Esophagus muscularis mucosa (tissue), 4 donors: ENCODE measurements at regions of chr14 and their contacts with region 1.

Region 1: GRCh38 chr14:33848706-33849454 is 102.0 kb downstream of the EGLN3 start:
- DNase-seq: peak; percentile 89
- H3K4me3 ChIP-seq: no peak overlapping the region
- H3K27ac ChIP-seq: no peak overlapping the region
- H3K4me1 ChIP-seq: peaks cover 0 to 8% (median 0%) of the 10 kb centered on the region in 4 donors
- H3K27me3 ChIP-seq: no peaks in the 10 kb centered on the region
- CTCF ChIP-seq: peak; percentile 59 to 79 (median 62)
- EP300 ChIP-seq: no peak
- POLR2A ChIP-seq: no peak

Region 2: GRCh38 chr14:33930439-33930838 is 81.6 kb after region 1 on chr14:
- intact Hi-C with region 1: no loop called
- DNase-seq: no peak
- H3K4me3 ChIP-seq: no peak overlapping the region
- H3K27ac ChIP-seq: no peak overlapping the region
- H3K4me1 ChIP-seq: peaks cover 19 to 38% (median 35%) of the 10 kb centered on the region in 4 donors
- H3K27me3 ChIP-seq: no peaks in the 10 kb centered on the region
- CTCF ChIP-seq: no peak
- EP300 ChIP-seq: no peak
- POLR2A ChIP-seq: no peak

Region 3: DNA sequence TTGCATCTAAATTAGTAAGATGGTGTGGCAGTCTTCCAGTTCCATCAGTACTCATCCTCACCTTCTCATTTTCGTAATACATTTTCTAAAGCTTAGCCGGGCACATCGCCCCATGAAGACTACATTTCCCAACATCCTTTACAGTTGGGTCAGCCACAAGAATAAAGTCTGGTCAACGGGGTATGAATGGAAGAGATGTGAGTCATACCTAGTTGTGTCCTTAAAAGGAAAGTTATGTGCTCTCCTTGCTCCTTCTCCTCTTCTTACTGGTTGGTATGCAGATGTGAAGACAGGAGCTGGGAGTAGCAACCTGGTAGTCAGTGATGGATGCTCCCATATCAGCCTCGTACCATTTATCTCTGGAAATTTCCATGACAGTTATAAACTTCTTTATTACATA is 137.9 kb after region 1 on chr14:
- intact Hi-C with region 1: no loop called
- DNase-seq: no peak
- H3K4me3 ChIP-seq: no peak overlapping the region
- H3K27ac ChIP-seq: peak overlapping the region; percentile 27 to 64 (median 45)
- H3K4me1 ChIP-seq: peaks cover 11 to 29% (median 24%) of the 10 kb centered on the region in 4 donors
- H3K27me3 ChIP-seq: no peaks in the 10 kb centered on the region
- CTCF ChIP-seq: no peak
- EP300 ChIP-seq: no peak
- POLR2A ChIP-seq: no peak

Region 4: DNA sequence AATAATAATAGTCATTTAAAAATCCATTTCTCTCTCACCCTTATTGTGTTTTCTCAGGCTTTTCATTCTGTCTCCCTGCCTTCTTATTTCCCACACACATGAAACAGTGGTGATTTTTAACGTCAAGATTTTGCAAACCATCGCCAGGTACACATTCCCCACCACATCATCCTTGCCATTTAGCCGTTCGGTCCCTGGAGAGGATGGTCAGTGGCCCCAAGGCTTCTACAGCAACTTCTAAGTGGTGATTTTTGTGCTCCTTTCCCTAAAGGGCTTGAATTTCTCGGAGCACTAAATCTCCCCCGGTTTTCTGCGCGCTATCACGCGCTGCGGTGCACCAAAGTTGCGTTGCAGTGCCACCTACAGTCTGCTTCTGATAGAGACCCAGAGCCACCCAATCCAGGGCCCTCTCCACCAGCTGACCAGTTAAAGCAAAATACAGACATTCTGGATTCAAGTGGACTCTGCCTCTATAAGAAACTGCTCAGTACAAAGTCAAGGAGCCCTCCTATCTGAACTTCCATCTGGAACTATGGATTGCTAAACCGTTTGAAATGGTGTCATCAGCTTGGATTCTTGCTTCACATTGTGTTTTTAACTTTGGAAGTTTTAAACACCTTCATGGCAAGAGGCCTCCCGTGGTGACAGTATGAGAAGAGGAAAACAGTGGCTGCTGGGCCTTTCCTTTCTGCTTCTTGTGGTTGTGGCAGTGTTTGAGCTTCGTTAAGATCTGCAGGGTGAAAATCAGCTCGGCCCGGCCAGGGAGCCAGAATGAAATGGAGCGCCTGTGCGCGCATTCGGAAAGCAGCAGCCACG is 379.2 kb after region 1 on chr14:
- intact Hi-C with region 1: loop called (anchors 5 kb)
- DNase-seq: no peak
- H3K4me3 ChIP-seq: peak overlapping the region; percentile 17 to 35 (median 28)
- H3K27ac ChIP-seq: peak overlapping the region; percentile 24 to 68 (median 58)
- H3K4me1 ChIP-seq: peaks cover 4 to 37% (median 31%) of the 10 kb centered on the region in 4 donors
- H3K27me3 ChIP-seq: no peaks in the 10 kb centered on the region
- CTCF ChIP-seq: peak; percentile 71 to 88 (median 86)
- EP300 ChIP-seq: no peak
- POLR2A ChIP-seq: no peak